Activated T-helper 1 cell treated with anti-CD3 and anti-CD28 coated beads, Interleukin-12 subunit alpha, Interleukin-12 subunit beta, Interleukin-2, Interleukin-4 antibody, amounts not matched to agents 30 ng/mL and 10 ng/mL and 1 ng/mL, durations not matched to agents 14 hours and 24 hours and 36 hours (primary cell): ENCODE measurements at regions of chr10 and their contacts with region 1.

Region 1: DNA sequence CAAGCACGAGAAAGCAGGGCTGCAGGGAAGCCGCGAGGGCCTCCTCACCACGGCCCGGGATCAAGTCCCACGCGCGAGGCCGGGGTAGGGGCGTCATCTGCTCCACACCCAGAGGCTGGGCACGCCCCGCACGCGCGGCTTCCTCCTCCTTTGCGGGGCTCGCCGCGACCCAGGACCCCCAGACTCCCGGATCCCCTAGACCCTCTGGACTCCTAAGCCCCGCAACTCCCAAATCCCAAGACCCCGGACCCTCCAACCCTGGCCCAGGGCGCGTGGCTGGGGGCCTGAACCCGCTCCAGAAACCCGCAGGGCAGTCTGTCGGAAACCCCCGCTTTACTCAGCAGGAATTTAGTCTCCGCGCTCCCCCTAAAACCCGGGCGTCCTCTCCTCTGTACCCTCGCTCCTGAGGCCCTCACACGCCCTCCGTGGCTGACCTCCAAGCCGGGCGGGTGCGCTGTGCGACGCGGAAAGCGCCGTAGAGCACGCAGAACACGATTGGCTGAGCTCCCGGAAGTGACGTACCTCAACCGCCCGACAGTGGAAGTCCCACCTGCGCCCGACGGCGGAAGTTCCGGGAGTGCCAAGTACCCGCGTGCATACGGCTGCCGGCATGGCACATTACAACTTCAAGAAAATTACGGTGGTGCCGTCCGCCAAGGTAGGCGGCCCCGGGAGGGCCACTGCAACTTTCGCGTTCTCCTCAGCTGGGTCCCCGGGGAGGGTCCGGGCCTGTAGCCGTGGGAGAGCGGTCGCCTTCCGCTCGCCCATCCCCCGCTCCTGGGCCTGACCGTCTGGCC is at the start of gene GTPBP4:
- DNase-seq: peak; percentile 94
- H3K4me3 Mint-ChIP-seq: peak within 1 kb of the TSS; percentile 97
- H3K27ac Mint-ChIP-seq: peak within 1 kb of the TSS; percentile 99
- H3K4me1 Mint-ChIP-seq: peaks cover 35% of the 10 kb centered on the region
- H3K27me3 Mint-ChIP-seq: no peaks in the 10 kb centered on the region
- total RNA-seq, gene GTPBP4: 193 and 202 TPM in 2 replicates

Region 2: GRCh38 chr10:511101-511848 is 476.8 kb before region 1 on chr10:
- intact Hi-C with region 1: loop called (anchors 5 kb)
- DNase-seq: peak; percentile 60
- H3K4me3 Mint-ChIP-seq: no peak overlapping the region
- H3K27ac Mint-ChIP-seq: no peak overlapping the region
- H3K4me1 Mint-ChIP-seq: peaks cover 18% of the 10 kb centered on the region
- H3K27me3 Mint-ChIP-seq: peaks cover 8% of the 10 kb centered on the region

Region 3: GRCh38 chr10:931416-932318 is 56.4 kb before region 1 on chr10 and contains the start of gene LARP4B:
- intact Hi-C with region 1: loop called (anchors 1 kb)
- DNase-seq: peak; percentile 98
- H3K4me3 Mint-ChIP-seq: peak within 1 kb of the TSS; percentile 99
- H3K27ac Mint-ChIP-seq: peak within 1 kb of the TSS; percentile 96
- H3K4me1 Mint-ChIP-seq: peaks cover 31% of the 10 kb centered on the region
- H3K27me3 Mint-ChIP-seq: no peaks in the 10 kb centered on the region
- total RNA-seq, gene LARP4B: 172 and 174 TPM in 2 replicates

Region 4: GRCh38 chr10:1010703-1011102 is 22.6 kb after region 1 on chr10:
- intact Hi-C with region 1: loop called (anchors 1 kb)
- DNase-seq: no peak
- H3K4me3 Mint-ChIP-seq: peak overlapping the region; percentile 61
- H3K27ac Mint-ChIP-seq: peak overlapping the region; percentile 97
- H3K4me1 Mint-ChIP-seq: peaks cover 44% of the 10 kb centered on the region
- H3K27me3 Mint-ChIP-seq: no peaks in the 10 kb centered on the region

Region 5: GRCh38 chr10:1048732-1049424 is 60.8 kb after region 1 on chr10 and contains the start of gene IDI1:
- intact Hi-C with region 1: loop called (anchors 1 kb)
- DNase-seq: peak; percentile 97
- H3K4me3 Mint-ChIP-seq: peak within 1 kb of the TSS; percentile 96
- H3K27ac Mint-ChIP-seq: peak within 1 kb of the TSS; percentile 99
- H3K4me1 Mint-ChIP-seq: peaks cover 68% of the 10 kb centered on the region
- H3K27me3 Mint-ChIP-seq: no peaks in the 10 kb centered on the region
- total RNA-seq, gene IDI1: 76.0 and 78.9 TPM in 2 replicates

Region 6: DNA sequence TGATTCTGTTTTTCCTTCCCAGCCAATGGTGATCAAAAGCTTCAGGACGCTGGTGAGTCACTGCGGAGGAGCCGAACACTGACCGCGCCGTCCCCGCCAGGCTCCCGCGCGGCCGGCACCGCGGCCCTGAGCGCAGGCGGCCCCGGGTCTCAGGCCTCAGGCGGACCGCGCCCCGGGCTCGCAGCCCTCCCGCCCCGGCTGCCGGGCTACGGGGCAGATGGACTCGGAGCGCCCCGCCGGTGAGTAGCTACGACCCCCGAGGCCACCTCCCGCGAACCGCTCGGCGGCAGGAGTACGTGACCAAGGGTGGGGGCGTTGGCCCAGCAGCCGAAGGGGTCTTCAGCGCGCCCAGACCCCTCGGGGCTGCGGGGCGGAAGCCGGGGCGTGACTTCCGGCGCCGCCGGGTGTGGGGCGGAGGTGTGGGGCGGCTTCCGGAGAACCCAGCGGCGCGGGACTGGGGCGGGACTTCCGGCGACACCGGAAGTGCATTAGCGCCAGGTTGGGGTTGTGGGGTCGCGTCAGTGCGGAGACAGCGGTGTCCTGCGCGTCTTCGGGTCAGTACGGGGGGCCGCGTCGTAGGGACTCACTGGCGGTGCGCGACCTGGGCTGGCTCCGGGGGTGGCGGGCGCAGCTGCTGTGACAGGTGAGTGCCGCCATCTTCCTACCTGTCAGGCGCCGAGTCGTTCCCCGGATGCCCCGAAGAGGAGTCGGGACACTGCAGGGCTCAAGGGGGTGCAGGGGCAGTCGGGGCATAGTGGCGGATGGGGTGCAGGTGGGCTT is 68.4 kb after region 1 on chr10 and contains the start of gene WDR37:
- intact Hi-C with region 1: loop called (anchors 2 kb)
- DNase-seq: peak; percentile 84
- H3K4me3 Mint-ChIP-seq: peak within 1 kb of the TSS; percentile 97
- H3K27ac Mint-ChIP-seq: peak within 1 kb of the TSS; percentile 91
- H3K4me1 Mint-ChIP-seq: peaks cover 78% of the 10 kb centered on the region
- H3K27me3 Mint-ChIP-seq: no peaks in the 10 kb centered on the region
- total RNA-seq, gene WDR37: 19.9 and 21.1 TPM in 2 replicates